HCT116 (cell line): ENCODE measurements at regions of chr12 and their contacts with region 1.

Region 1: GRCh38 chr12:133037207-133038005 is at the start of gene ZNF84:
- DNase-seq: peak; percentile 86
- ATAC-seq: peak; percentile 93
- H3K4me3 ChIP-seq: peak within 1 kb of the TSS; percentile 59 to 62
- H3K27ac ChIP-seq: peak within 1 kb of the TSS; percentile 81
- H3K4me1 ChIP-seq: peaks cover 0 to 4% of the 10 kb centered on the region in 2 experiments; a peak in 1 of 4 replicates
- H3K27me3 ChIP-seq: no peaks in the 10 kb centered on the region
- CTCF ChIP-seq: no peak
- POLR2A ChIP-seq: no peak
- RAD21 ChIP-seq: no peak
- total RNA-seq, gene ZNF84: 9.8 TPM

Region 2: DNA sequence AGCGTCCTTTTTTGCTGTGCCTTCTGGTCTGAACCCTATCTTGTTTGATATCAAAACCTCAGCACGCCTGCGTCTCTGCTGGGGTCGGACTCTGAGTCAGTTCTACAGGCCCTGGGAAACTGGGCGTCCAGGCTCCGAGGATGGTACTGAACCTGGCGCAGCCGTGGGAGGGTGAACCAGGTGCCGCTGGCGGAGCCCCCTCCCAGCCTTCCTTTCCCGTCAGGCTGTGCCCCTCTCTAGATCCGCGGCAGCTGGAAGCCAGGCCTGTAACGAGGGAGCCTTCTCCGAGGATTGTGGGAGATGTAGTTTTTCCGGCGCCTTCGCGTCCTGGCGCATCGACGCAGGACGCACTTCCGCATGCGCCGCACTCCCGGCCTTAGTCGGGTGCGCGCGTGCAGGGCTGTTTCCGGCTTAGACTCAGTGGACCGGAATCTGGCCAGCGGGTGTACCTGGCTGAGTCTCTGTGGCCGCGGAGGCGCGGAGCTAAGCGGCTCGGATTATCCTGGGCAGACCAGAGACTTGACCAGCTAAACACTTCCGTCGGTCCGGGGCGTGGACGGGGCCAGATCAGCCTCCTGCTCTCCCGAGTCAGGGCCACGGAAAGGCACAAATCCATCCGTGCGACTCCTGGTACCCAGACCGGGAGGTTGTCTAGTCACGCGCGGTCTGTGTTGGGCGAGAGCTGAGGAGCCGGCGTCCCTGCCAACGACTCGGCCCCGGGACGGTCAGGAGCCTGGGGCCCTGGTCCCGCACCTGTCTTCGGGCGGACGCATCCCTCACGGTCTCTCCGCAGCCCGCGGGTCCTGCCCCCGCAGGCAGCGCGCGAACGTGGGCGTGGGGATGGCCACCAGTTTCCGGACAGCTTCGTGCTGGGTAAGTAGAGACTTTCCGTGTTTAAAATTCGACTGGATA is 51.1 kb before region 1 on chr12 and contains the start of gene ZNF26:
- CTCF ChIA-PET with region 1: no interaction called
- POLR2A ChIA-PET with region 1: no interaction called
- RAD21 ChIA-PET with region 1: no interaction called
- intact Hi-C with region 1: loop called (anchors 2 kb)
- DNase-seq: peak; percentile 60
- ATAC-seq: peak; percentile 93
- H3K4me3 ChIP-seq: peak within 1 kb of the TSS; percentile 64 to 70
- H3K27ac ChIP-seq: peak within 1 kb of the TSS; percentile 48
- H3K4me1 ChIP-seq: 0 out of 4 replicates have a peak, but pooled peaks cover 0 to 3% of the 10 kb centered on the region in 2 experiments
- H3K27me3 ChIP-seq: no peaks in the 10 kb centered on the region
- CTCF ChIP-seq: no peak
- POLR2A ChIP-seq: no peak
- RAD21 ChIP-seq: no peak
- total RNA-seq, gene ZNF26: 4.4 TPM

Region 3: DNA sequence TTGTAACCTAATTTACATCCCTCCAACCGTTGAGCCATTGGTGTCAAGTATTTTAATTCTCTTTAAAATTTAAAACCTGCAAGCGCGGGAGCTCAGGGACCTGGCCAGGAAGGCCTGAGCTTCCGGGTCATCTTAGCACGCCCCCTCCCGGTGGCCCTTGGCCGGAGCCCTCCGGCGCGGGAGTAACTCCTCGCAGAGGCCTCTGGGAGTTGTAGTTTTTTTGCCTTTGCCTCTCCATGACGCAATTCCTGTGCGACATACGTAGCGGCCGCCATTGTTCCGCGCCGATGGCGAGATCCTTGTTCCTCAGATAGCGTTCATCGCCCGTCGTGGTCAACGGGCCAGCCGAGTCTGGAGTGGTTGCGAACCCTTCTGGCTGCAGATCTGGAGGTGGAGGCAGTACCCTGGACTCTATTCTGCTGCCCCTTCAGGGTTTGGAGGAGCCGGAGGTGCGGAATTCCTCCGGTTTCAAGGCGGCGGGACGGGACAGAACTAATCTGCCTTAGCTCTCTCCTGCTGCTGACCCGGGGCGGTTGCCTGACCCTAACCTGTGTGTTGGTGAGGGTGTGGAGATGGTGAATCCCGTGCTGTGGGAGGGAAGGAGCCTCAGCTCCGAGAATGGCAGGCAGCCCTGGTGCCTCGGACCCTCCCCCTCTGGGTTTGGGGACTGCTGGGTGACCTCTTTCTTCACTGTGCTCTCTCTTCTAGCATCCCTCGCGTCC is 144.0 kb after region 1 on chr12 and contains the start of gene ZNF268:
- CTCF ChIA-PET with region 1: no interaction called
- POLR2A ChIA-PET with region 1: no interaction called
- RAD21 ChIA-PET with region 1: no interaction called
- intact Hi-C with region 1: loop called (anchors 1 kb)
- DNase-seq: peak; percentile 85
- ATAC-seq: peak; percentile 96
- H3K4me3 ChIP-seq: peak within 1 kb of the TSS; percentile 77 to 83
- H3K27ac ChIP-seq: peak within 1 kb of the TSS; percentile 56
- H3K4me1 ChIP-seq: peaks cover 0 to 7% of the 10 kb centered on the region in 2 experiments; a peak in 1 of 4 replicates
- H3K27me3 ChIP-seq: no peaks in the 10 kb centered on the region
- CTCF ChIP-seq: peak; percentile 66 to 86 (median 67)
- POLR2A ChIP-seq: no peak
- RAD21 ChIP-seq: peak; percentile 56
- total RNA-seq, gene ZNF268: 12.2 TPM